ENCODE measurements at regions of chr15 and their contacts with region 1.

Region 1: DNA sequence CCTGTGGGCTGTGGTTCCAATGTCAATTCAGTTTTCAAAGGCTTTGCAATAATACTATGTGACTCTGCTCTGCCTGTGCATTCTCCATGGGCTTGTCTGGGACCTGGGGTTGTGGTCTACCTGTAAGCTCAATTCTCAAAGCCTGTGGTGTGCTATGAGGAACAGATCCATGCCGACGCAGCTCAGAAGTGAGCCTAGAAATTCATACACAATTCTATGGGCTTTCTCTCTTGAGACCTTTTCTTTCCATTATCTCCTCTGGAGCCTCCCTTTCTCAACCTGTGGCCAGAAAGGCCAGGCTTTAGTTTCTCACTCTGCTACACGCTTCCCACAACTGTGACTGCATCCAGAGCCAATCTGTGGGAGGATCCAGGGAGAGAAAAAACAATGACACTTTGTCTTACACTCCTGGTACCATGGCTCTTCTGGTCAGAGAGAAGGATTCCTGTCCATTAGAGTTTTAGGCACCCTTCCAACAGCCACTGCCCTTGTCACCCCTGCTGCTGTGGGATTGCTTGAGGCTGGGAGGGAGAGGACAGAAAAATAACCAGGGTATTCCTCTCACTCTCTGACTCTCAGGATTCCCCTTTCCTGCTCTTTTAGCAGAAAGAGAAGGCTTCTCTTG is 34.1 kb upstream of the KLF13 start:
- DNase-seq: peak; percentile 34 to 35
- H3K4me3 ChIP-seq: no peak overlapping the region
- H3K27ac ChIP-seq: peak overlapping the region; percentile 20 to 44
- H3K4me1 ChIP-seq: no peaks in the 10 kb centered on the region
- H3K27me3 ChIP-seq: no peaks in the 10 kb centered on the region
- CTCF ChIP-seq: no peak
- POLR2A ChIP-seq: no peak

Region 2: GRCh38 chr15:31311735-31312619 is 19.5 kb after region 1 on chr15:
- intact Hi-C with region 1: loop called (anchors 1 kb)
- DNase-seq: peak; percentile 7 to 48
- H3K4me3 ChIP-seq: no peak overlapping the region
- H3K27ac ChIP-seq: no peak overlapping the region
- H3K4me1 ChIP-seq: no peaks in the 10 kb centered on the region
- H3K27me3 ChIP-seq: peaks cover 0 to 9% of the 10 kb centered on the region in 2 donors
- CTCF ChIP-seq: no peak
- POLR2A ChIP-seq: no peak

Region 3: GRCh38 chr15:32933236-32933635 is 1640.7 kb after region 1 on chr15:
- intact Hi-C with region 1: no loop called
- DNase-seq: no peak
- H3K4me3 ChIP-seq: no peak overlapping the region
- H3K27ac ChIP-seq: no peak overlapping the region
- H3K4me1 ChIP-seq: no peaks in the 10 kb centered on the region
- H3K27me3 ChIP-seq: no peaks in the 10 kb centered on the region
- CTCF ChIP-seq: no peak
- POLR2A ChIP-seq: no peak